ENCODE measurements at regions of chr13 and their contacts with region 1.

Region 1: DNA sequence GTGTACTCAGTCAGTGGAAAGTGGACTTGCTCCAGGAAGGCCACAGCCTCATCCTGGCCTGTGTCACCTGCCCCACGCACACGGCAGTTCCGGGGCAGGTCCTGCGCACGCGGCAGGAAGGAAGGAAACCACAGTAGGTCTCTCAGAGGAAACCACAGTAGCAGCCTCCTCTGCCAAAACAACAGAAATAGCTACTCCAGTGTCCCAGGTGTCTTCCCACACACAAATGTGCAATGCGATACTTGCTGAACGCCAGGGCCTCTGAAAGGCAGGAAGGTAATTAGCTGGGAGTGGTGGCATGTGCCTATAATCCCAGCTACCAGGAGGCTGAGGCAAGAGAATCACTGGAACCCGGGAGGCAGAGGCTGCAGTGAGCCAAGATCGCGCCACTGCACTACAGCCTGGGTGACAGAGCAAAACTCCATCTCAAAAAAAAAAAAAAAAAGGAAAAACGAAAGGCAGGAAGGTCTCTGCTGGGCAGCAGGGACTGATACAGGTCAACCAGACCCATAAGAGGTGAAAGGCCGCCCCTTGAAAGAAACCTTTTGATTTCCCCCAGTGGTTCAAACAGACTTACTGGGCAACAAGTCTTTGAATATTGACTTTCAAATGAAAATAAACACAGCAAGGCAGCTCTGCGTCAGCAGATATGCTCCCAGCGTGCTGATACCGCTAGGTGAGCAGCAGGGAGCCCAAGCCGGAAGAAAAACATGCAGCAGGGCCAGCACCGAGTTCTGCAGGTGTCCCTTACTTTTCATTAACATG is 49.5 kb downstream of the CRYL1 start:
- DNase-seq: peak; percentile 83
- H3K4me3 Mint-ChIP-seq: peak overlapping the region; percentile 57
- H3K27ac Mint-ChIP-seq: peak overlapping the region; percentile 84
- H3K4me1 Mint-ChIP-seq: peaks cover 45% of the 10 kb centered on the region
- H3K27me3 Mint-ChIP-seq: no peaks in the 10 kb centered on the region

Region 2: GRCh38 chr13:20192158-20192835 is 283.8 kb before region 1 on chr13:
- CTCF ChIA-PET with region 1: interaction called, 11 read pairs
- POLR2A ChIA-PET with region 1: no interaction called
- intact Hi-C with region 1: loop called (anchors 5 kb)
- DNase-seq: peak; percentile 22
- H3K4me3 Mint-ChIP-seq: peak overlapping the region; percentile 64
- H3K27ac Mint-ChIP-seq: no peak overlapping the region
- H3K4me1 Mint-ChIP-seq: peaks cover 17% of the 10 kb centered on the region
- H3K27me3 Mint-ChIP-seq: peaks cover 49% of the 10 kb centered on the region

Measured in activated CD4-positive, alpha-beta memory T cell treated with anti-CD3 and anti-CD28 coated beads for 36 hours (primary cell).